Left ventricle myocardium superior (tissue), 1 donor: ENCODE measurements at regions of chrX and their contacts with region 1.

Region 1: DNA sequence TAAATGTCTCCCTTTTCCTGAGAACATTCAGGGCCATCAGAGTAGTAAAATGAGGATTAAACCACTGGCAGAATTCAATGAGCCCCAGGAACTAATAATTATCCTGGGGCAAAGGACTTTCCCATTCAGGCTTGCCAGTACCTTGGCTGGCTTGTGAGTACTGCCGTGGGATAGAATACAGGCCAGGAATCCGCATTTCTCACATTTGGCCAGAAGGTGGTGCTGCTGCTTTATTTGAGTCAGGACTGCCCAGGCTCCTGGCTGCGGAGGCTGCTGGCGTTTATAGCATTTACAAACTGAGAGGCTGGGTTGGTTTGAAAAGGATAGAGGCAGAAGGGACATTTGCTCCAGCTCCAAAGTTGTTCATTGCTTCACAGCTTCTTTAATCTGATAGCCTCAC is 91.4 kb downstream of the RTL9 start:
- DNase-seq: peak; percentile 65
- ATAC-seq: peak; percentile 93

Region 2: DNA sequence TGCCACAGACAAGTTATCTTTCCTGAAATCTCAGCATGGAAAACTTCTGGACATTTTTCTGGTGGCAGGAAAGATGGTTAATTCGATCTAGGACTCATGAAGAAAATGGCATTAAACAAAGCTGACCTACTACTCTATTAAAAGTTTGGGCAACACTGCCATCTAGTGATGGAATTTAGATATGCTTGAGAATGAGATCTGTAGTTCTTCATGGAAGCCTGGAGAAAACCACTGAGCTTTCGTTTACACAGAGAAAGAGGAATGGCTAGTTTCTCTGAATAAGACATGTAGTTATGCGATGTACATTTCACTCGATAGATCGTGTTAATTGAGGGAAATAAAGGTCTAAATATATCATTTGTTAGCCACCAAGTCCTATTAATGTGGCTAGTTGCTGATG is 397.3 kb after region 1 on chrX:
- intact Hi-C with region 1: loop called (anchors 5 kb)
- DNase-seq: no peak
- ATAC-seq: peak; percentile 48